Posterior cingulate gyrus (tissue), 11 donors: ENCODE measurements at regions of chrX and their contacts with region 1.

Region 1: DNA sequence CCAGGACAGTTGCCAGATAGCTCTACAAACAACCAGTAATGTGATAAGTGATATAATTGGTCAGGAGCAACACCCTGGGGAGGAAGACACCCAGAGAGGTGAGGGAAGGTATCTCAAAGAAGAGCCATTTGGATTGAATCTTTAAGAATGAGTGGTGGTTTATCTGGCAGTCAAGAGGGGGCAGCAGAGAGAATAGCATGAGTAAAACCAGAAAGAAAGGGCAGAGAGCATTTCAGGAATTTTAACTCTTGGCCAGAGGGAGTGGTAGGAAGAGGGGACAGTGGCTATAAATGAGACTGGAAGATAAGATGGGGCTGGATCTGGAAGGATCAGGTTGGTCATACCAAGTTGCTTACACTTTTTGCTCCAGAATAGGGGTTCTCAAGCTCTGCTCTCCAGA is 5.9 kb upstream of the SEPTIN6 start:
- DNase-seq: no peak

Region 2: GRCh38 chrX:119753571-119754257 is 54.9 kb after region 1 on chrX:
- intact Hi-C with region 1: loop called (anchors 2 kb)
- DNase-seq: no peak